AG04449 (cell line): ENCODE measurements at regions of chr22 and their contacts with region 1.

Region 1: DNA sequence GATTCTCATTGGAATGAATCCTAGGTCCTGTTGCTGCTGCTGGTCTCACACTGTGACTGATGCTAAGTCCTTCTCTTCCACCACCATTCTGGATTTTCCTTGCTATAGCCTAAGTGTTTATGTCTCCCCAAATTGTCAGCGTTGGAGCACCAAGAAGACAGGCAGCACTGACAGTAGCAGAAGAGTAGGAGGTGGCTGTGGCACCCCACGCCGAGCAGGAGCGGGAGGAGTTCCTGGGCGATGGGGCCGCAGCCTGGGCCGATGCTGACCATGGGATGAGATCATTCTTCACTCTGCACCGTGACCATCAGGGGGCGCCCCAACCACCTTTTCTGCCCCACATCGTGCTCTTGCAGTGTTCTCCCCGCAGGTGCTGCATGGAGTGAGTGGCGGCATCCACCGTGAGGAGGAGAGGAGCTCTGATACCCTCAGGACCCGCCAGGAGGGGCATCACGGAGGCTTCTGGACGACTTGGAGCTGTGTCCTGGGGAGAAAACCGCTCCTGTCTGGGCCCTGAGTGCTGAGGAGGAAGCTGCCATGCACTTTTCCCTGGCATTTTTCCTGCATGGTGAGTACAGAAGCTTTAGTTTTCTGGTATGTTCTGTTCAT is 57.0 kb downstream of the LRRC74B start:
- DNase-seq: no peak
- H3K4me3 ChIP-seq: no peak overlapping the region; the same call in 1 of the 2 replicates
- CTCF ChIP-seq: peak; percentile 90

Region 2: GRCh38 chr22:21045585-21046294 is 57.0 kb before region 1 on chr22 and contains the start of gene LRRC74B:
- CTCF ChIA-PET with region 1: interaction called, 20 read pairs
- POLR2A ChIA-PET with region 1: interaction called, 3 read pairs
- DNase-seq: peak; percentile 33
- H3K4me3 ChIP-seq: peak within 1 kb of the TSS; percentile 60
- CTCF ChIP-seq: no peak

Region 3: DNA sequence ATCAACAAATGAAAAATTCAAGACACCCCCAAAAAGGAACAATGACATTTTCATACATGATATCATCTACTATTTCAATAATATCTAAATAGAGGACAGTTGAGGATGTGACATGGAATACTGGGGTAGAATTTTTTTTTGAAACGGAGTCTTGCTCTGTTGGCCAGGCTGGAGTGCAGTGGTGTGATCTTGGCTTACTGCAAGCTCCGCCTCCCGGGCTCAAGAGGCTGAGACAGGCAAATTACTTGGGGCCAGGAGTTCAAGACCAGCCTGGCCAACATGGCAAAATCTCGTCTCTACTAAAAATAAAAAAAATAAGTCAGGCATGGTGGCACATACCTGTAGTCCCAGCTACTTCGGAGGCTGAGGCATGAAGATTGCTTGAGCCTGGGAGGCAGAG is 15.6 kb before region 1 on chr22:
- CTCF ChIA-PET with region 1: interaction called, 14 read pairs
- POLR2A ChIA-PET with region 1: no interaction called
- DNase-seq: no peak
- H3K4me3 ChIP-seq: no peak overlapping the region
- CTCF ChIP-seq: no peak

Region 4: GRCh38 chr22:21447694-21448402 is 345.1 kb after region 1 on chr22:
- CTCF ChIA-PET with region 1: no interaction called
- POLR2A ChIA-PET with region 1: no interaction called
- DNase-seq: no peak
- H3K4me3 ChIP-seq: no peak overlapping the region
- CTCF ChIP-seq: no peak